Breast epithelium (tissue), 4 donors: ENCODE measurements at regions of chr5 and their contacts with region 1.

Region 1: GRCh38 chr5:155546075-155546474 is 532.5 kb downstream of the KIF4B start:
- DNase-seq: no peak
- H3K4me3 ChIP-seq: no peak overlapping the region
- H3K27ac ChIP-seq: no peak overlapping the region
- H3K4me1 ChIP-seq: no peaks in the 10 kb centered on the region
- H3K27me3 ChIP-seq: no peaks in the 10 kb centered on the region
- CTCF ChIP-seq: no peak
- POLR2A ChIP-seq: no peak

Region 2: GRCh38 chr5:155492191-155492590 is 53.9 kb before region 1 on chr5:
- intact Hi-C with region 1: loop called (anchors 2 kb)
- DNase-seq: no peak
- H3K4me3 ChIP-seq: no peak overlapping the region
- H3K27ac ChIP-seq: no peak overlapping the region
- H3K4me1 ChIP-seq: no peaks in the 10 kb centered on the region
- H3K27me3 ChIP-seq: no peaks in the 10 kb centered on the region
- CTCF ChIP-seq: no peak
- POLR2A ChIP-seq: no peak

Region 3: DNA sequence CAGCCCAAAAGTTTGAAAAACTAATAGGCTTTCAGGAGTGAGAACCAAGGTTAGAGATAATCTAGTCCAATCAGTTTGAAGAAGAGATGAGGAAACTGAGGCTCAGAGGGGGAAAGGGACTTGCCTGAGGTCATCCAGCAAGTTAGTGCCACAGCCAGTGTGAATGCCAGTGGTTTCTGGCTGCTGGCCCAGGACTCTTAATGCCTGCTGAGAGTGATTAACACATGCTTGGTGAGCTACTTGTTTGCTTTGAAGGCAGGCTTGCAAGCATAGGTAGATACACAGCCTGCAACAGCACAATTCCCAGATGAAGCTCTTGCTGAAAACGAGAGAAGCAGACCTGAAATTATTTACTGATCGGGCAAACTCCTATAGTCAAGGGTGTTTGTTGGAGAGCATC is 189.3 kb after region 1 on chr5:
- intact Hi-C with region 1: no loop called
- DNase-seq: peak in 1 of 2 donors; percentile 22
- H3K4me3 ChIP-seq: no peak overlapping the region
- H3K27ac ChIP-seq: no peak overlapping the region
- H3K4me1 ChIP-seq: no peaks in the 10 kb centered on the region
- H3K27me3 ChIP-seq: peaks cover 0 to 16% of the 10 kb centered on the region in 2 donors
- CTCF ChIP-seq: no peak
- POLR2A ChIP-seq: no peak